CD4-positive, alpha-beta memory T cell (primary cell): ENCODE measurements at regions of chr20 and their contacts with region 1.

Region 1: DNA sequence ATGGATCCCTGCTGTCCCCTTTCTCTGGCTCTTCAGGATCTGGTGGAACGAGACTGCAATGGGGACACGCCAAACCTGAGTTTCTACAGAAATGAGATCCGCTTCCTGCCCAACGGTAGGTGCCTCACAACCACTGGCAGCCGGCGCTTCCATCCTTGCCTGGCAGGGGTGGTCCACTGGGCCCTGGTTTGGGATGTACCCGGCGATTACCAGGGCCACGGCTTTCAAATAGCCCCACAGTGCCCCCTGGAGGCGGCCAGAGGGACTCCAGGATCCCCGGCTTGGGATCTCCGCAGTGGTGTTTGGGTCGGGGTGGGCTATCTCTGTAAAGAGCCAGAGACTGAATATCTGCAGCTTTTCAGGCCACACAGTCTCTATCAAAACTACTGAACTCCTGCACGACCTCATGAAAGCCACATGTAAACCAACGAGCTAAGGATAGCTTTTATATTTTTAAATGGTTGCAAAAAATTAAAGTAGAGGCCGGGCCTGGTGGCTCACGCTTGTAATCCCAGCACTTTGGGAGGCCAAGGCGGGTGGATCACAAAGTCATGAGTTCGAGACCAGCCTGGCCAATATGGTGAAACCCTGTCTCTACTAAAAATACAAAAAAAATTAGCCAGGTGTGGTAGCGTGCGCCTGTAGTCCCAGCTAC is 3.7 kb downstream of the OGFR start:
- DNase-seq: peak; percentile 67 to 77 (median 68)
- H3K4me3 ChIP-seq: no peak overlapping the region
- H3K4me3 Mint-ChIP-seq: peak overlapping the region in 6 of 8 donors; percentile 36 to 86 (median 56)
- H3K27ac ChIP-seq: no peak overlapping the region
- H3K27ac Mint-ChIP-seq: peak overlapping the region in 6 of 7 donors; percentile 41 to 84 (median 78)
- H3K4me1 ChIP-seq: peaks cover 38% of the 10 kb centered on the region
- H3K4me1 Mint-ChIP-seq: peaks cover 8 to 41% (median 22%) of the 10 kb centered on the region in 4 donors
- H3K27me3 ChIP-seq: no peaks in the 10 kb centered on the region
- H3K27me3 Mint-ChIP-seq: peaks cover 0 to 1% of the 10 kb centered on the region in 2 donors

Region 2: DNA sequence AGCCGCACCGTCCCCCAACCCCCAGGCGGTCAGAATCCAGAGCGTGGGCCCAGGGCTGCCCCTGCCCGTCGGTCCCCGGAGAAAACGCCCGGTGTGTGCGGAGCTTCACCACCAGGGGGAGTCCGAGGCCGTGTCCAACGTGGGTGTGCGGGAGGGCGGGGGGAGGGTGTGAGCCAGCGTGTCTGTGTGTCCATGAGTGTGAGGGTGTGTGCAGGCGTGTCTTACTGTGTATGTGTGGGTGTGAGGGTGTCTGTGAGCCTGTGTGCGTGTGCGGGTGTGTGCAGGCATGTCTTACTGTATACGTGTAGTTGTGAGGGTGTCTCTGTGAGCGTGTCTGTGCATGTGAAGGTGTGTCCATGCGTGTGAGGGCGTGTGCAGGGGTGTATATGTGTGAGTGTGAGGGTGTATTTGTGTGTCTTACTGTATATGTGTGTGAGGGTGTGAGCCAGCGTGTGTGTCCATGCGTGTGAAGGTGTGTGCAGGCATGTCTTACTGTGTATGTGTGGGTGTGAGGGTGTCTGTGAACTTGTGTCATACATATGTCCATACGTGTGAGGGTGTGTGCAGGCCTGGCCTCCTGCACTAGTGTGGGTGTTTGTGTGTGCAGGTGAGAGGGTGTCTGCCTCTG is 308.0 kb before region 1 on chr20:
- CTCF ChIA-PET with region 1: interaction called, 17 read pairs
- POLR2A ChIA-PET with region 1: interaction called, 3 read pairs
- intact Hi-C with region 1: loop called (anchors 1 kb)
- DNase-seq: peak; percentile 64 to 78 (median 66)
- H3K4me3 ChIP-seq: no peak overlapping the region
- H3K4me3 Mint-ChIP-seq: peak overlapping the region in 1 of 8 donors; percentile 48
- H3K27ac ChIP-seq: no peak overlapping the region
- H3K27ac Mint-ChIP-seq: peak overlapping the region in 4 of 7 donors; percentile 59 to 89 (median 61)
- H3K4me1 ChIP-seq: peaks cover 14% of the 10 kb centered on the region
- H3K4me1 Mint-ChIP-seq: peaks cover 11 to 23% (median 17%) of the 10 kb centered on the region in 4 donors
- H3K27me3 ChIP-seq: no peaks in the 10 kb centered on the region
- H3K27me3 Mint-ChIP-seq: peaks cover 0 to 2% of the 10 kb centered on the region in 2 donors

Region 3: DNA sequence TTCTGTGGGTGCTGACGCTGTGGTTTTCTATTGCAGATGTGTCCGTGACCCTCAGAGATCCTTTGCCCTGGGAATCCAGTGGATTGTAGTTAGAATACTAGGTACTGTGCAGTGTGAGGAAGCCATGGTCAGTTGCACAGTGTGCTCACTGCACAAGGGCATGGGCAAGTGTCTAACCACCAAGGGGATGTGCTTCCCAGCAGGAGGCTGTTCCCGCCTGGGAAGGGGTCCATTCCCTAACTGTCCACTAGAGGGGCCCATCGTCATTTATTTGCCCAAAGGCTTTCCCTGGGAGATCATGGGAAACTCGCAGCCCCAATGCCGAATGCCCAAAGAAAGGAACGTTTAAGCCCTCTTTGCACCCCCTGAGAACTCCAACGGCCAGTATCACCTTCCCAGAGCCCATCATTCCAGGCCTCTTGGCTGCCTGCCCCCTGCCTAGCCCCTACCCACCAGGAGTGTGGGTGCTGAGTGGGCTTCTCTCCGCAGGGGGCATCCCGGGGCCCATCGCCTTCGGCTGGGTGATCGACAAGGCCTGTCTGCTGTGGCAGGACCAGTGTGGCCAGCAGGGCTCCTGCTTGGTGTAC is 139.8 kb before region 1 on chr20:
- CTCF ChIA-PET with region 1: interaction called, 17 read pairs
- POLR2A ChIA-PET with region 1: interaction called, 3 read pairs
- intact Hi-C with region 1: no loop called
- DNase-seq: peak in 4 of 5 donors; percentile 21 to 40 (median 38)
- H3K4me3 ChIP-seq: no peak overlapping the region
- H3K4me3 Mint-ChIP-seq: no peak overlapping the region
- H3K27ac ChIP-seq: no peak overlapping the region
- H3K27ac Mint-ChIP-seq: no peak overlapping the region
- H3K4me1 ChIP-seq: no peaks in the 10 kb centered on the region
- H3K4me1 Mint-ChIP-seq: peaks cover 0 to 3% (median 0%) of the 10 kb centered on the region in 4 donors
- H3K27me3 ChIP-seq: no peaks in the 10 kb centered on the region
- H3K27me3 Mint-ChIP-seq: no peaks in the 10 kb centered on the region

Region 4: GRCh38 chr20:62907384-62908317 is 99.3 kb after region 1 on chr20:
- CTCF ChIA-PET with region 1: no interaction called
- POLR2A ChIA-PET with region 1: no interaction called
- intact Hi-C with region 1: no loop called
- DNase-seq: peak in 2 of 5 donors; percentile 31 to 36
- H3K4me3 ChIP-seq: no peak overlapping the region
- H3K4me3 Mint-ChIP-seq: no peak overlapping the region
- H3K27ac ChIP-seq: no peak overlapping the region
- H3K27ac Mint-ChIP-seq: peak overlapping the region in 5 of 7 donors; percentile 29 to 68 (median 42)
- H3K4me1 ChIP-seq: no peaks in the 10 kb centered on the region
- H3K4me1 Mint-ChIP-seq: peaks cover 10 to 37% (median 16%) of the 10 kb centered on the region in 4 donors
- H3K27me3 ChIP-seq: no peaks in the 10 kb centered on the region
- H3K27me3 Mint-ChIP-seq: no peaks in the 10 kb centered on the region

Region 5: GRCh38 chr20:63884506-63885263 is 1076.3 kb after region 1 on chr20:
- CTCF ChIA-PET with region 1: no interaction called
- POLR2A ChIA-PET with region 1: no interaction called
- intact Hi-C with region 1: no loop called
- DNase-seq: no peak
- H3K4me3 ChIP-seq: no peak overlapping the region
- H3K4me3 Mint-ChIP-seq: no peak overlapping the region
- H3K27ac ChIP-seq: no peak overlapping the region
- H3K27ac Mint-ChIP-seq: no peak overlapping the region
- H3K4me1 ChIP-seq: no peaks in the 10 kb centered on the region
- H3K4me1 Mint-ChIP-seq: peaks cover 0 to 1% (median 0%) of the 10 kb centered on the region in 4 donors
- H3K27me3 ChIP-seq: no peaks in the 10 kb centered on the region
- H3K27me3 Mint-ChIP-seq: no peaks in the 10 kb centered on the region